ENCODE measurements at regions of chr15 and their contacts with region 1.

Region 1: DNA sequence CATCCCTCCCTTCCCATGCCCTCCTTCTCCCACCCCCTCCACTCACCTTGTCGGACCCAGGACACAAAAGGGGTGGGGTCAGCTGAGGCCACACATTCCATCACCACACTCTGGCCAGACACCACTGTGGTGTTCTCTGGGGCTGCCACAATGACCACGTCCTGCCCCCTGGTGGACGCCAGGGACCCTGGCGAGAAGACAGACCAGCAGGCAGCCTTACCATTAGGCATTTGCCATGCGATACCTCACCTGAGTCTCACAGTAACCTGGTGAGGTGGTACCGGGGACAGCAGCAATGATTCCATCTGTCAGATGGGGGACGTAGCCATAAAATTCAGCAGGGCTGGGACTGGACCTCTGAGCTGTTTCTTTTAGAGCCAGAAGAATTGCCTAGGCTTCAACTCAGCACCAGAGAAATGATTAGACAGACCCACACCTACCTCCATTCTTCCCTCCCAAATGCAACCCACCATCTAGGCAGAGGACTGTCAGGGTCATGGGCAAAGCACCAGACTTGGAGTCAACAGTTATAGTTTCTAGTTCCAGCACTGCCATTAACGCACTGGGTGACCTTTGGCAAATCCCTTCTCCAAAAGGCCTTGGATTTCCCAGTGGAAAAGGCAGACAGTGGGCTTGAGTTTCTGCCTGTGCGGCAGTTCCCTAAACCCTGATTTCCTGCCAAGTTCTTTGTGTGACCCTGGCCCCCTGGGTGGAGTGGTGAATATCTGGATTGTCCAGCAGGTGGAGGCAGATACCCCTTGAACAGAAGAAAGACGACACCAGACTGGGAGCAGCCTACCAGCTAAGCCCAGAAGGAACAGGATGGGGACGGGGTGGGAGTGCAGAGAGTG is 21.8 kb downstream of the IGDCC4 start:
- DNase-seq: peak; percentile 79 to 84
- H3K4me3 ChIP-seq: no peak overlapping the region
- H3K27ac ChIP-seq: peak overlapping the region; percentile 25 to 65 (median 33)
- H3K4me1 ChIP-seq: peaks cover 11 to 16% of the 10 kb centered on the region in 2 donors
- H3K27me3 ChIP-seq: no peaks in the 10 kb centered on the region
- CTCF ChIP-seq: peak; percentile 15 to 85 (median 68)
- POLR2A ChIP-seq: no peak

Region 2: DNA sequence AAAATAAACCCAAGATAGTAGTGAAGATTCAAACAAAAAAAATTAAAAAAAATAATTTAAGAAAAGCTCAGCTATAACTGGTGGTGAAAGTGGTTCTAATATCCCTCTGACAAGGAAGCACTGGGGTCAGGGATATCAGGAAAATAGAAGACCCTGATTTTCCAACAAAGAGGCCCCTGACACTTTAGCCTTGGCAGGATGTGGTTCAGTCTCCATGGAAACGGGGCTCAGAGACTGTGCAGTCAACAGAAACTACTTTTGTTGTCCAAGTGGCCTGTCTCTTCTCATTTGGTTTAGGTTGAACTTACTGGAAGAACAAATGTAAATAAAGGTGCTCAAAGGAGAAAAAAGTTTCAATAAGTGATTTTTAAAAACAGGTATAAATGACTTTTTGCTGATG is 182.7 kb after region 1 on chr15:
- intact Hi-C with region 1: loop called (anchors 10 kb)
- DNase-seq: no peak
- H3K4me3 ChIP-seq: no peak overlapping the region
- H3K27ac ChIP-seq: peak overlapping the region in 2 of 3 donors; percentile 26 to 40
- H3K4me1 ChIP-seq: peaks cover 12 to 28% of the 10 kb centered on the region in 2 donors
- H3K27me3 ChIP-seq: no peaks in the 10 kb centered on the region
- CTCF ChIP-seq: no peak
- POLR2A ChIP-seq: no peak